ENCODE measurements at regions of chr16 and their contacts with region 1.

Region 1: DNA sequence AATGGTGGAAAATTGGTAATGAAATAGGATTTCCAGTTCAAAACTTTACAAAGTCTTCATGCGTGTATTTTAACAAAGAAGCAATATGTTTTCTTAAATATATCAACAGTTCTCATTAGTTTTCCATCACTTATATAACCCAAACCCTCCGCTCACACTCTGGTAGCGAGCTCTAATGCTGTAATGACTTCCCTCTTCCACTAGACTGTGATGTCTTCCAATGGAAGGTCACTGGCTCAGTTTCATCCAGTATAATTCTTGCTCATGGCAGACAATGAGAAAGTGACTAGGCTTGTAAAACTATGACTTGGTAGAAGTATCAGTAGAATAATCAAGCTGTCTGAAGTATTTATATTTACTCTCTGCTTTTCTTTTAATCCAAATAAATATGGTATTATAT is 32.8 kb downstream of the NETO2 start:
- DNase-seq: no peak
- ATAC-seq: no peak
- H3K4me3 ChIP-seq: no peak overlapping the region
- H3K27ac ChIP-seq: no peak overlapping the region
- H3K4me1 ChIP-seq: no peaks in the 10 kb centered on the region; the same call in 1 of the 2 replicates
- H3K27me3 ChIP-seq: no peaks in the 10 kb centered on the region
- CTCF ChIP-seq: peak in 1 of 3 experiments; percentile 14; a peak in 1 of 6 replicates
- EP300 ChIP-seq: no peak
- POLR2A ChIP-seq: no peak
- RAD21 ChIP-seq: no peak

Region 2: DNA sequence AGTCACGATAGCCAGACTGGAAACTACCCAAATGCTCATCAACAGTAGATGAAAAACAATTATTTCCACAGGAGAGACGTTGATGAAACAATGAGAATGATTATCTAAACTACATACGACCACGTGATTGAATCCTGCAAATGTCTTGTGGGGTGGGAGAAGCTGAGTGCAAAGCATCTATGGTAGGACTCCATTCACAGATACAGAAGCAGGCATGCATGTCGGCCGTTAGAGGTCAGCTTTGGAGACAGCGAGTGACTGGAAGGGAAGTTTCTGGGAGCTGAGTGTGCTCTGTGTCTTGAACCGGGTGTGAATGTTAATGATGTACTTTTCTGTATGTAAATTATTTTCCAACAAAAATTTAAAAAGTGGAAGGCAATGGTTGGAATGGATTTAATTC is 65.9 kb before region 1 on chr16:
- CTCF ChIA-PET with region 1: interaction called, 7 read pairs
- POLR2A ChIA-PET with region 1: interaction called, 4 read pairs
- RAD21 ChIA-PET with region 1: interaction called, 17 read pairs
- SMC1A ChIA-PET with region 1: interaction called, 18 read pairs
- in situ Hi-C with region 1: no loop called
- intact Hi-C with region 1: no loop called
- DNase-seq: no peak
- ATAC-seq: no peak
- H3K4me3 ChIP-seq: no peak overlapping the region
- H3K27ac ChIP-seq: no peak overlapping the region
- H3K4me1 ChIP-seq: peaks cover 22% of the 10 kb centered on the region
- H3K27me3 ChIP-seq: no peaks in the 10 kb centered on the region
- CTCF ChIP-seq: no peak
- EP300 ChIP-seq: no peak
- POLR2A ChIP-seq: no peak
- RAD21 ChIP-seq: no peak

Region 3: GRCh38 chr16:47073223-47074155 is 37.5 kb before region 1 on chr16:
- CTCF ChIA-PET with region 1: interaction called, 5 read pairs
- POLR2A ChIA-PET with region 1: interaction called, 5 read pairs
- RAD21 ChIA-PET with region 1: interaction called, 7 read pairs
- SMC1A ChIA-PET with region 1: interaction called, 14 read pairs
- in situ Hi-C with region 1: no loop called
- intact Hi-C with region 1: no loop called
- DNase-seq: peak; percentile 43
- ATAC-seq: peak; percentile 82
- H3K4me3 ChIP-seq: no peak overlapping the region
- H3K27ac ChIP-seq: peak overlapping the region; percentile 48
- H3K4me1 ChIP-seq: peaks cover 12% of the 10 kb centered on the region
- H3K27me3 ChIP-seq: no peaks in the 10 kb centered on the region
- CTCF ChIP-seq: no peak
- EP300 ChIP-seq: 0 out of 4 replicates have a peak, but pooled peaks of 1 of the 2 experiments have one; percentile 27
- POLR2A ChIP-seq: no peak
- RAD21 ChIP-seq: no peak

Region 4: DNA sequence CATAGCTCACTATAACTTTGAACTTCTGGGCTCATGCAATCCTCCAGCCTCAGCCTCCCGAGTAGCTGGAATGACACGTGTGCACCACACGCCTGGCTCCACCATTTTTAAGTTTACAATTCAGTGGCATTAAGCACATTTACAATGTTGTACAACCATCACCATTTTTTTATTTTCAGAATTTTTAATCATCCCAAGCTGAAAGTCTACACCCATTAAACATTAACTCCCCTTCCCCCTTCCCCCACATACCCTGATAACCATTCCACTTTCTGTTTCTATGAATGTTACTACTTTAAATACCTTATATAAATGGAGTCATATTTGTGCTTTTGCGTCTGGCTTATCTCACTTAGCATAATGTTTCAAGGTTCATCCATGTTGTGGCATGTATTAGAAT is 14.8 kb after region 1 on chr16:
- CTCF ChIA-PET with region 1: interaction called, 8 read pairs
- POLR2A ChIA-PET with region 1: no interaction called
- RAD21 ChIA-PET with region 1: interaction called, 3 read pairs
- SMC1A ChIA-PET with region 1: interaction called, 12 read pairs
- in situ Hi-C with region 1: no loop called
- intact Hi-C with region 1: no loop called
- DNase-seq: no peak
- ATAC-seq: no peak
- H3K4me3 ChIP-seq: no peak overlapping the region
- H3K27ac ChIP-seq: no peak overlapping the region
- H3K4me1 ChIP-seq: no peaks in the 10 kb centered on the region
- H3K27me3 ChIP-seq: no peaks in the 10 kb centered on the region
- CTCF ChIP-seq: no peak
- EP300 ChIP-seq: no peak
- POLR2A ChIP-seq: no peak
- RAD21 ChIP-seq: no peak

Measured in GM12878 (cell line).